Posterior cingulate gyrus (tissue), 11 donors: ENCODE measurements at regions of chr2 and their contacts with region 1.

Region 1: DNA sequence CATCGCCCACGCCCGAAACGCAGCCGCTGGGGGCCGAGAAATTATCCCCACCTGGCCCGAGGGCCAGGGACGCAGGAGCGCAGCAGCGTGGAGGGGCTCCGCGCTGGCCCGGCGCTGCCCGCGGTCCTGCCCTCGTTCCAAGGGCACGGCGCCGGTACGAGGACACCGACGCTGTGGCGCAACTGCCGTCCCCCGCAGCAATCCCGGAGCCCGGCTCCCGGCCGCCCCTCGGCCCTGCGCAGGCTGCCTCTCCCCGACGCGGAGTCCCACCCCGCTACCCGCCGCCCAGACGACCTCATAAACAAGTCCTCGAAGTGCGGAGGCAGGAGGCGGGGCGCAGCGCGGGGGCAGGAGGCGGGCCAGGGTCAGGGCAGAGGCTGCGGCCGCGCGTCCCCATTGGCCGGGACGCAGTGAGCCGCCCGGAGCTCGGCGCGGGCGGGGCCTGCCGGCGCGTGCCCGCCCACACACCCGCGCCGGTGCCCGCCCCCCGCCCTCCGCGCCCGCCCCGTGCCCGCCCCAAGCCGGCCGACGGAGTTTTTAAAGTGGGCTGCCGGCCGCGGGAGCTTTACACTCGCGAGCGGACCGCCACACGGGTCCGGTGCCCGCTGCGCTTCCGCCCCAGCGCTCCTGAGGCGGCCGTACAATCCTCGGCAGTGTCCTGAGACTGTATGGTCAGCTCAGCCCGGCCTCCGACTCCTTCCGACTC is at the start of gene EPAS1:
- DNase-seq: peak; percentile 61 to 96 (median 75)

Region 2: GRCh38 chr2:46062637-46063412 is 234.2 kb before region 1 on chr2:
- intact Hi-C with region 1: loop called (anchors 5 kb)
- DNase-seq: peak in 9 of 10 donors; percentile 28 to 90 (median 72)

Region 3: DNA sequence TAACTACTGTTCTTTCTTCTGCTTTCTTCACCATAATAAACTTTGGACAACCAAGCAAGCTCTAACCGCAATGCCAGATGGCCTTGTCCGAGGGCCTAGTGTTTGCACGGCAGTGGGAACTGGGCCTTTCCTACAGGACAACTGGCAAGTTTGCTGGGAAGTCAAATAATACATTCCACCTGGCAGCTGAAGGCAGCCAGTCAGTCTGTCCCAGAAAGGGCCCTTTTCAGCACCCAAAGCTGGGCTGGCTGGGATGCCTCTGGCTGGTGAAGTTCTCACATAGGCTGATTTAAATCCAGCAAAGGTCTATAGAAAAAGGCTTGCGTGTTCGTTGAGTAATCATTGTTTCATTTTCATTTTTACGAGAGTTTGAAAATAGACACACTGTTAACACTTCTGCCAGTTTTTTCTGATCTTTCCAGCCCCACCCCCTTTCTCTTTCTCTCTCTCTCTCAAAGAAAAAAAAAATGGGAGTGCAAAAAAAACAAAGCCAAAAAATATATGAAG is 109.8 kb before region 1 on chr2:
- intact Hi-C with region 1: no loop called
- DNase-seq: no peak